Transverse colon (tissue), 4 donors: ENCODE measurements at regions of chr12 and their contacts with region 1.

Region 1: GRCh38 chr12:16359512-16360491 is 12.4 kb downstream of the MGST1 start:
- DNase-seq: peak; percentile 64
- H3K4me3 ChIP-seq: no peak overlapping the region
- H3K27ac ChIP-seq: no peak overlapping the region
- H3K4me1 ChIP-seq: peaks cover 0 to 6% (median 2%) of the 10 kb centered on the region in 4 donors
- H3K27me3 ChIP-seq: no peaks in the 10 kb centered on the region
- CTCF ChIP-seq: peak; percentile 66 to 83 (median 75)
- EP300 ChIP-seq: no peak
- POLR2A ChIP-seq: no peak

Region 2: DNA sequence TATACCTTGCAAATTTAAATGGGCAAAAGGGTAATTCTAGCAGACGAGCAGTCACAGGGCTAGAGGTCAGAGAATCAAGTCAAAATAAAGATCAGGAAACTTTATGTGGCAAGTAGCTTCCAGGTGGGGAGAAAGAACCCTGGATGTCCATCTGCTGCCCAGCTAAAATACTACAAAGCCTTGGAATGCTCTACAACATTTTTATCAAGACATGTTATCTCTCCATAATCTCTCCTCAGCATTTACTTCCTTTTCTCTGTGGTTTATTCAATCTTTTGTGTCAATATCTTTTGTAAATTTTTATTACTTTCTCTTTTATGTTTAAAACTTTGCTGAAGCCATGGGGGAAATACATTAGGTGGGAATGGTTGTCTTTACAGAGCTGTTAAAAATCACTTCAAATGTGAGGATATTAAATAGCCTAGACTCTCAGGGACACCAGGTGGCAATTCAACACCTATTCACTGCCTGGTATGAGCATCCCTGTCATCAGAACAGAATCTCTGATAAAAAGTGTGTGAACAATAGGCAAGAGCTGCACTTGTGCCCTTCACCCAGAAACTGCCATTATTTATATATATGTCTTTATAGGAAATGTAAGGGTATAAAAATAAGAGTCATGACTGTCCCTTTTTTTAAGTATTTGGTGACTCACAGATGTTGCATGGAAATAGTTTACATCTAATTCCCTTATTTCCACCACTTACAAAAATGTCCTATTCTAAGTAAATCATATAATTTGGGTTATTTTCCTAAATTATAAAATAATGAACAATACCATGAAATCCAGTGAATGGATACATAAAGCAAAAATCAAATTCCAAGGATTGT is 723.5 kb before region 1 on chr12:
- in situ Hi-C with region 1: no loop called
- intact Hi-C with region 1: no loop called
- DNase-seq: no peak
- H3K4me3 ChIP-seq: no peak overlapping the region
- H3K27ac ChIP-seq: no peak overlapping the region
- H3K4me1 ChIP-seq: peaks cover 0 to 4% (median 0%) of the 10 kb centered on the region in 4 donors
- H3K27me3 ChIP-seq: no peaks in the 10 kb centered on the region
- CTCF ChIP-seq: no peak
- EP300 ChIP-seq: no peak
- POLR2A ChIP-seq: no peak

Region 3: DNA sequence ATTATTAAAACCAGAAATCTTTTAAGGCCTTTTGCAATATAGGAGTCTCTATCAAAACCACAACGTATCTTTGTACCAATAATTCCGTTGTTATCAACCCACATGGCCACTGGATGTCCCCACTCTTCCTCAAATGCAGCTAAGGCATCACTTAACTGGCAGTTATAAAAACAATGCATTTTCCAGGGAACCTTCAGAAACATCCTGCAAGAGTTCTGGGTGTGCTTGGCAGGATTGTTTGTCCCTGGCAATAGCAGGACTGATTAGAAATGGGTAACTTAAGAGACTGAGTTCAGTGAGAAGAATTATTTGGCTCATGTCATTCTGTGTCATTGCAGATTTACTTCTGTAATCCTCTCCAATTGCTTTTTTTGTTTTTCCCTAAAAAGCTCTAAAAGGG is 194.3 kb before region 1 on chr12:
- in situ Hi-C with region 1: loop called in 1 of 4 experiments (anchors 10 kb)
- intact Hi-C with region 1: loop called (anchors 10 kb)
- DNase-seq: peak; percentile 52
- H3K4me3 ChIP-seq: no peak overlapping the region
- H3K27ac ChIP-seq: no peak overlapping the region
- H3K4me1 ChIP-seq: peaks cover 0 to 10% (median 0%) of the 10 kb centered on the region in 4 donors
- H3K27me3 ChIP-seq: no peaks in the 10 kb centered on the region
- CTCF ChIP-seq: peak; percentile 40 to 68 (median 50)
- EP300 ChIP-seq: no peak
- POLR2A ChIP-seq: no peak

Region 4: GRCh38 chr12:16175840-16176239 is 184.0 kb before region 1 on chr12:
- in situ Hi-C with region 1: loop called in 3 of 4 experiments (anchors 10 to 25 kb)
- intact Hi-C with region 1: no loop called
- DNase-seq: no peak
- H3K4me3 ChIP-seq: no peak overlapping the region
- H3K27ac ChIP-seq: no peak overlapping the region
- H3K4me1 ChIP-seq: no peaks in the 10 kb centered on the region
- H3K27me3 ChIP-seq: no peaks in the 10 kb centered on the region
- CTCF ChIP-seq: no peak
- EP300 ChIP-seq: no peak
- POLR2A ChIP-seq: no peak

Region 5: DNA sequence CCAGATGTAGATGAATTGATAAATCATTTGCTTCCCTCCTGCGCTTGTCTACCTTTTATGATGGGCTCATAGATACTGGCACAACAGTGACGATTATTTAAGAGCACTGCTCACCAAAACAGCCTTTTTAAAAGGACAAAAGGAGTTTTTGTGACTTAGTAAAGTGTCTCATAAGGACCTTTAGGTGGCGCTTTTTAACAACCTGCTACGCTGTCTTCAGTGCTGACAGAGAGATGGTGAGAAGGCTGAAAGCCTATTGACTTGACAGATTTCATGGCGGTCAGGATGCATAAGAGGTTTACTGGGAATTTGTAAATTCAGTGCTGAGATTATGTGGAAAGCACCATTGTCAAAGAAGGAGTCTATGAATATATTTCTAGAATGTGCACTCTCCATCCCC is 170.0 kb before region 1 on chr12:
- in situ Hi-C with region 1: loop called in 2 of 4 experiments (anchors 10 to 25 kb)
- intact Hi-C with region 1: no loop called
- DNase-seq: no peak
- H3K4me3 ChIP-seq: no peak overlapping the region
- H3K27ac ChIP-seq: no peak overlapping the region
- H3K4me1 ChIP-seq: no peaks in the 10 kb centered on the region
- H3K27me3 ChIP-seq: no peaks in the 10 kb centered on the region
- CTCF ChIP-seq: peak in 4 of 5 experiments; percentile 14 to 44 (median 33)
- EP300 ChIP-seq: no peak
- POLR2A ChIP-seq: no peak